Activated CD8-positive, alpha-beta memory T cell treated with anti-CD3 and anti-CD28 coated beads, Interleukin-2, amount 10 ng/mL, durations not matched to agents 7 days and 5 days (primary cell): ENCODE measurements at regions of chr3 and their contacts with region 1.

Region 1: GRCh38 chr3:27721717-27722542 is at the start of gene EOMES:
- DNase-seq: peak; percentile 86
- ATAC-seq: peak; percentile 74
- H3K4me3 Mint-ChIP-seq: peak within 1 kb of the TSS; percentile 81
- H3K27ac Mint-ChIP-seq: peak within 1 kb of the TSS; percentile 84
- H3K4me1 Mint-ChIP-seq: peaks cover 42% of the 10 kb centered on the region
- H3K27me3 Mint-ChIP-seq: peaks cover 48% of the 10 kb centered on the region
- total RNA-seq, gene EOMES: 7.3 to 12.5 TPM

Region 2: DNA sequence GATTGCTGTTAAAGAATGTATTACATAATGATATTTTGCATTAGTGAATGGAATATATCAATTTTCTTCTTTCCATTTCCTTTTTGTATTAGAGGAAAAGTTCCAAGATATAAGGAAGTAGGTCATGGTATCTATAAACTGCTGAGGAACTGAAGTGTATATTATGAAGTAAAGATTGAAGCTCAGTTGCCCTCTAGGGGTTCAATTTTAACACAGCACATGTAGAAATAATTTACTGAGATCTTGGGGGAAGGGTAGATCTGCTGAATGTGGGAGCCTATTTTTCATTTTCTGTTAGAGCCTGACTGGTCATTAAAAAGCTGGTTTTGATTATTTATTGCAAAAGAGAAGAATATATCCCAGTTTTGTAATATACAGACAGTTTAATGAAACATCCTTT is 564.7 kb after region 1 on chr3:
- CTCF ChIA-PET with region 1: interaction called, 24 read pairs
- DNase-seq: no peak
- ATAC-seq: peak; percentile 80
- H3K4me3 Mint-ChIP-seq: no peak overlapping the region
- H3K27ac Mint-ChIP-seq: no peak overlapping the region
- H3K4me1 Mint-ChIP-seq: peaks cover 13% of the 10 kb centered on the region
- H3K27me3 Mint-ChIP-seq: no peaks in the 10 kb centered on the region

Region 3: DNA sequence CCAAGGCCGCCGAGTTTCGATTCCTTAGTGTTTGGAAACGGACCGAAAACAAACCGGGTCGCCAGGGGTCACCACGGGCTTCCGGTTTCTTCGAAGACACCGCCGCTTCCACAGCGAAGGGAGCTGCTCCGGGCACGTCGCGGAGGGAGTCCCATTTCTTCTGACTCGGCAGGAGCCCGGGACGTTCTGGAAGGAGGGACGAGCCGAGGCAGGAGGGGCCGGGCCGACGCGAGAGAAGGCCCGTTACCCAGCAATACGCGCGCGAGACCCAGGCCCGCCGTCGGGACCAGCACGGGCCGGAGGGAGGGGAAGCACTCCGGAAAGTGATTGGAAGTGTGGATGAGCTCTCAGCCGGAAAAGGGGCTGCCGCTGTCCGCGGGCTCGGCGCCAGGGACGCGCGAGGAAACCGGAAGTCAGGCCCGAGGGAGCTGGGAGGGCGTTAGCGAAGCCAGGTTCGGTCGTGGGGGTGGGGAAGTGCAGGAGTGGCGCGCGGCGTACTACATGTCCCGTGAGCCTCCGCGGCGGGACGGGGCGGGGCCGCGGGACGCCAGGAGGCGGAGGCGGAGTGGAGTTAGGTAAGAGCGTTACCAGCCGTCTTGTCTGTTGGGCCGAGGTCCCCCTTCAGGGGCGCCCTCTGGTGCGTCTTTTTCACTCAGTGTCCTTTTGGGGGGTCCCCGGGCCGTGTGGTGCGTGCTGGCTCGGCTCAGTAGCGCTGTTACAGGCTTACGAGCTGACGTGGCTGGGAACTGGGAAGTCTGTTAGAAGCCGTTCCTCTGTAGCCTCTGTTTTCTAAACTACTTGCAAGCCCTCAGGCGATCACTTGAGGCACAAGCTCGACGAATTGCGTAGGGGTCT is 626.9 kb after region 1 on chr3 and contains the starts of genes AZI2 and ZCWPW2:
- CTCF ChIA-PET with region 1: interaction called, 11 read pairs
- DNase-seq: peak; percentile 96
- ATAC-seq: peak; percentile 85
- H3K4me3 Mint-ChIP-seq: peak within 1 kb of the TSS; percentile 86
- H3K27ac Mint-ChIP-seq: peak within 1 kb of the TSS; percentile 99
- H3K4me1 Mint-ChIP-seq: peaks cover 43% of the 10 kb centered on the region
- H3K27me3 Mint-ChIP-seq: no peaks in the 10 kb centered on the region
- total RNA-seq, gene AZI2: 63.3 to 68.1 TPM
- total RNA-seq, gene ZCWPW2: 0.35 TPM in 1 of 2 experiments, not detected in the other